T-cell (primary cell): ENCODE measurements at regions of chr2 and their contacts with region 1.

Region 1: GRCh38 chr2:15092691-15093090 is 460.2 kb downstream of the LRATD1 start:
- DNase-seq: no peak
- ATAC-seq: no peak
- H3K4me3 ChIP-seq: no peak overlapping the region
- H3K4me3 Mint-ChIP-seq: no peak overlapping the region
- H3K27ac ChIP-seq: no peak overlapping the region
- H3K27ac Mint-ChIP-seq: no peak overlapping the region
- H3K4me1 ChIP-seq: no peaks in the 10 kb centered on the region
- H3K4me1 Mint-ChIP-seq: no peaks in the 10 kb centered on the region
- H3K27me3 ChIP-seq: peaks cover 0 to 4% of the 10 kb centered on the region in 2 experiments
- H3K27me3 Mint-ChIP-seq: no peaks in the 10 kb centered on the region

Region 2: DNA sequence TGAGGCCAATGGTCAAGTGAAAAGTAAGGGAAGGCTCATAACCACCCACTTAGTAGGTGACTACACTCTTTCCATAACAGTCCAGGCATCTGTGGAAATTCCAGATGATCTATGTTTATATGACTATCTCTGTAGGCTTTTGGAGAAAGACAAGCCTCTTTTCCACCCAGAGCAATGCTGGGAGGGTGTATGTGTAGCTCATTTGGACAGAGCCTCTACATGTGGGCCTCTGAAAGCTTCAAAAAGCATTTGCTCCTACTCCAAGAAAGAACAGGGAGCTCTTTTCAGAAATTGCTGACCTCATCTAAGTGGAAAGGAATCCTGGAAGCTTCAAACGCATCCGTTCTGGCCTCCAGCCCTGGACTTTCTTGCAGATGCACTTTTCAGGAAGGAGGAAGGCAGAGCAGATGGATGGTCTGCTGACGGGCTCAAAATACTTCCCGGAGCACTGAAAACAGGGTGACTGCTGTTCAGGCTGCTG is 151.5 kb before region 1 on chr2:
- CTCF ChIA-PET with region 1: no interaction called
- POLR2A ChIA-PET with region 1: interaction called in 1 of 2 experiments, 17 read pairs
- DNase-seq: no peak
- ATAC-seq: no peak
- H3K4me3 ChIP-seq: no peak overlapping the region
- H3K4me3 Mint-ChIP-seq: no peak overlapping the region
- H3K27ac ChIP-seq: no peak overlapping the region
- H3K27ac Mint-ChIP-seq: no peak overlapping the region
- H3K4me1 ChIP-seq: no peaks in the 10 kb centered on the region
- H3K4me1 Mint-ChIP-seq: no peaks in the 10 kb centered on the region
- H3K27me3 ChIP-seq: no peaks in the 10 kb centered on the region
- H3K27me3 Mint-ChIP-seq: peaks cover 2 to 17% of the 10 kb centered on the region in 2 donors